Activated naive CD4-positive, alpha-beta T cell treated with anti-CD3 and anti-CD28 coated beads for 36 hours (primary cell): ENCODE measurements at regions of chr1 and their contacts with region 1.

Region 1: GRCh38 chr1:26417111-26417759 is 6.6 kb downstream of the LIN28A start:
- DNase-seq: peak; percentile 92
- H3K4me3 Mint-ChIP-seq: no peak overlapping the region
- H3K27ac Mint-ChIP-seq: no peak overlapping the region
- H3K4me1 Mint-ChIP-seq: no peaks in the 10 kb centered on the region
- H3K27me3 Mint-ChIP-seq: peaks cover 14% of the 10 kb centered on the region

Region 2: GRCh38 chr1:26035959-26036755 is 381.1 kb before region 1 on chr1:
- CTCF ChIA-PET with region 1: interaction called, 3 read pairs
- intact Hi-C with region 1: loop called (anchors 5 kb)
- DNase-seq: peak; percentile 78
- H3K4me3 Mint-ChIP-seq: peak overlapping the region; percentile 88
- H3K27ac Mint-ChIP-seq: no peak overlapping the region
- H3K4me1 Mint-ChIP-seq: peaks cover 13% of the 10 kb centered on the region
- H3K27me3 Mint-ChIP-seq: peaks cover 3% of the 10 kb centered on the region

Region 3: DNA sequence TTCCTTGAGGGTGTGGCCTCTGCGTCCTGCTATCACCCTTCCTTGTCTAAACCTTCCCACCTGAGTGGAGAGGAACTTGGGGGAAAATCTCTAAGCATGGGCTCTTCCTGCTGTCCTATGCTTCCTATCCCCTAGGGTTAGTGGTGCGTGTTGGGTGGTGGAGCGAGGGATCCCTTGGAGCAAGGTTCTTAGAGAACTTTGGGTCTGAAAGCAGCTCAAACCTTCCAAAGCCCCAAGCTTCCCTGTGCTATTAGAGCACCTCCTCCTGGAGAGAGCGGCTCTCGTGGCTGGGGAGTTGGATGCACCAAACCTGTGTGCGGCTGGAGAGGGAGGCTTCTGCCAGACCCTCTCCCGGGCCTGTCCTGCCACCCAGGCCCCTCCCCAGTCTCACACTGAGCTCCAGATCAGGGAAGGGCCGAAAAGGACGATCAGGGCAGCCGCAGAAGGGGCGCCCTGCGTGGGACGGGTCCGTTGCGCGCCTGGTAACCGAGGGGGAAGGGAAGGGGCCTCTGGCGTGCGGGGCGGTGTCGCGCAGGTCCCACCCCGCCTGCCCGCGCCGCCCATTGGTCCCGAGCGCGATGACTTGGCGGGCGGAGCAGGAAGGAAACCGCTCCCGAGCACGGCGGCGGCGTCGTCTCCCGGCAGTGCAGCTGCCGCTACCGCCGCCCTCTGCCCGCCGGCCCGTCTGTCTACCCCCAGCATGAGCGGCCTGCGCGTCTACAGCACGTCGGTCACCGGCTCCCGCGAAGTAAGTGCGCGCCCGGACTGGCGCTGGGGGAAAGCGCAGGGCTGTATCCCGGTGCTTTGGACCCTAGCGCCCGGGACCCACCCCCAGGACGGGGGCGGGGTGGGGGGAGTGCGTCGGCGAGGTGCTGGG is 137.5 kb before region 1 on chr1 and contains the start of gene SH3BGRL3:
- CTCF ChIA-PET with region 1: interaction called, 20 read pairs
- intact Hi-C with region 1: loop called (anchors 1 kb)
- DNase-seq: peak; percentile 86
- H3K4me3 Mint-ChIP-seq: peak within 1 kb of the TSS; percentile 81
- H3K27ac Mint-ChIP-seq: peak within 1 kb of the TSS; percentile 87
- H3K4me1 Mint-ChIP-seq: peaks cover 87% of the 10 kb centered on the region
- H3K27me3 Mint-ChIP-seq: no peaks in the 10 kb centered on the region
- total RNA-seq, gene SH3BGRL3: 130 to 132 TPM

Region 4: GRCh38 chr1:26321315-26322041 is 95.8 kb before region 1 on chr1:
- CTCF ChIA-PET with region 1: interaction called, 18 read pairs
- intact Hi-C with region 1: no loop called
- DNase-seq: peak; percentile 99
- H3K4me3 Mint-ChIP-seq: peak overlapping the region; percentile 65
- H3K27ac Mint-ChIP-seq: peak overlapping the region; percentile 90
- H3K4me1 Mint-ChIP-seq: peaks cover 44% of the 10 kb centered on the region
- H3K27me3 Mint-ChIP-seq: no peaks in the 10 kb centered on the region

Region 5: DNA sequence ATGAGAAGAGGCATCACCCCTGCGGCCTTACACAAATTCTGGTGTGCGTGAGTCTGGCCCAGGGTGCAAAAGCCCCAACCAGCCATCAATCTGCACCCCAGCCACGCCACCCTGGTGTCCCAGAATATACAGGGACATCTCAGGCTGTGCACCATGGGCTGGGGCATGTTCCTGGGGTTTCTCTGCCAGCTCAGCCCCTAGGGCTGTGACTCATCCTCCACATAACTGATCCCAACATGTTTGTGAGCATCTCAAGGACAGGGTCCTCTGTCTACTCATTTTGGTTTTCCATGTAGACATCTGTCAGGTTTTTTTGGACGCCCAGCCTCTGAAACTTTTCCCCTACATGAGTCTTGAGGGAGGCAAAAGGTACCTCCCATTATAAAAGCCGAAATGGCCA is 45.2 kb before region 1 on chr1:
- CTCF ChIA-PET with region 1: interaction called, 12 read pairs
- intact Hi-C with region 1: no loop called
- DNase-seq: no peak
- H3K4me3 Mint-ChIP-seq: no peak overlapping the region
- H3K27ac Mint-ChIP-seq: no peak overlapping the region
- H3K4me1 Mint-ChIP-seq: peaks cover 65% of the 10 kb centered on the region
- H3K27me3 Mint-ChIP-seq: no peaks in the 10 kb centered on the region

Region 6: GRCh38 chr1:26405281-26405915 is 11.8 kb before region 1 on chr1:
- CTCF ChIA-PET with region 1: interaction called, 42 read pairs
- intact Hi-C with region 1: no loop called
- DNase-seq: no peak
- H3K4me3 Mint-ChIP-seq: no peak overlapping the region
- H3K27ac Mint-ChIP-seq: no peak overlapping the region
- H3K4me1 Mint-ChIP-seq: peaks cover 16% of the 10 kb centered on the region
- H3K27me3 Mint-ChIP-seq: peaks cover 25% of the 10 kb centered on the region

Region 7: GRCh38 chr1:27033043-27033746 is 616.0 kb after region 1 on chr1:
- CTCF ChIA-PET with region 1: no interaction called
- intact Hi-C with region 1: no loop called
- DNase-seq: no peak
- H3K4me3 Mint-ChIP-seq: no peak overlapping the region
- H3K27ac Mint-ChIP-seq: no peak overlapping the region
- H3K4me1 Mint-ChIP-seq: no peaks in the 10 kb centered on the region
- H3K27me3 Mint-ChIP-seq: no peaks in the 10 kb centered on the region